Activated CD4-positive, alpha-beta T cell treated with anti-CD3 and anti-CD28 coated beads, Interleukin-2, amount 10 ng/mL, durations not matched to agents 24 days and 14 days (primary cell): ENCODE measurements at regions of chr20 and their contacts with region 1.

Region 1: GRCh38 chr20:32249030-32249738 is 28.3 kb upstream of the KIF3B start:
- DNase-seq: peak; percentile 85
- H3K4me3 Mint-ChIP-seq: peak overlapping the region; percentile 56
- H3K27ac Mint-ChIP-seq: peak overlapping the region; percentile 90
- H3K4me1 Mint-ChIP-seq: peaks cover 49% of the 10 kb centered on the region
- H3K27me3 Mint-ChIP-seq: no peaks in the 10 kb centered on the region

Region 2: GRCh38 chr20:32231847-32232246 is 17.3 kb before region 1 on chr20:
- intact Hi-C with region 1: loop called (anchors 1 kb)
- DNase-seq: peak; percentile 82
- H3K4me3 Mint-ChIP-seq: peak overlapping the region; percentile 75
- H3K27ac Mint-ChIP-seq: peak overlapping the region; percentile 96
- H3K4me1 Mint-ChIP-seq: peaks cover 29% of the 10 kb centered on the region
- H3K27me3 Mint-ChIP-seq: no peaks in the 10 kb centered on the region

Region 3: DNA sequence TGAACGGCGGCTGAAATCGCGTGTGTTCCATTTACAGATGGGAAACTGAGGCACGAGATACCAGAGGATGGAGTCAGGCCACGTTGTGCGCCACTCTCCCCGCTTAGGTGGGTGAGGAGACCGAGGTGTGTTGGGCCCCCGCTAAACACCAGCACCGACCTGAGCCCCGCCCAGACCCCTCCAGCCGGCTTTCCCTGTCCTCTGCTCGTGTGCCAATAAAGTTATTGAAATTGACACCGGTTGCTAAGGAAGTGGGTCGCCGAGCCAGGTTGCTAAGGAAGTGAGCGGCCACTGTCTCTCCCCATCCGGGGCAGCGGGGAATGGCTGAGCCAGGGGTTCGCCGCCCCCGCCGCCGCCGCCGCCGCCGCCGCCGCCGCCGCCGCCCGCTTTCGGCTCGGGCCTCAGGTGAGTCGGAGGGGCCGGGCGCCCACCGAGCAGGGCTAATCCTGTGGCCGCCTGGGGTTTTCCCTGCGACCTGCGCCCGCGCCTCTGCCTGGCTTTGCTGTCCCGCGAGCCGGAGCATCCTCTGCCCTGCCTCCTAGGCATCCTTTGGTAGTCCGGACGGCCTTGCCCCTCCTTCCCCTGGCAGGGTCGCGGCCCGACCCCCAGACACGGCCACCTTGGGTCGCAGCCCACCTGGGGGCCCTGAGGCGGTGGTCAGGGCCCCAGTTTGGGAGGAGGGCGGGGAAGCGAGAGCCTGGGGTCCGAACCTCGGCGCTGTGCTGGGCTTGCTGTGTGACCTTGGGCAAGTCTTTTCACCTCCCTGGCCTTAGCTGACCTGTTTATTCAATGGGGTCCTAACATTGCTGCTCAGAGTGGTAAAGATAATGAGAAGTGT is 28.4 kb after region 1 on chr20 and contains the start of gene KIF3B:
- intact Hi-C with region 1: loop called (anchors 1 kb)
- DNase-seq: peak; percentile 96
- H3K4me3 Mint-ChIP-seq: peak within 1 kb of the TSS; percentile 97
- H3K27ac Mint-ChIP-seq: peak within 1 kb of the TSS; percentile 91
- H3K4me1 Mint-ChIP-seq: peaks cover 36% of the 10 kb centered on the region
- H3K27me3 Mint-ChIP-seq: no peaks in the 10 kb centered on the region
- total RNA-seq, gene KIF3B: 34.7 and 35.5 TPM in 2 replicates

Region 4: GRCh38 chr20:32285621-32286371 is 36.6 kb after region 1 on chr20:
- intact Hi-C with region 1: loop called (anchors 1 kb)
- DNase-seq: peak; percentile 81
- H3K4me3 Mint-ChIP-seq: peak overlapping the region; percentile 59
- H3K27ac Mint-ChIP-seq: peak overlapping the region; percentile 87
- H3K4me1 Mint-ChIP-seq: peaks cover 54% of the 10 kb centered on the region
- H3K27me3 Mint-ChIP-seq: no peaks in the 10 kb centered on the region